ENCODE measurements at regions of chr14 and their contacts with region 1.

Region 1: GRCh38 chr14:21852061-21852664 is 178.5 kb upstream of the OR4E1 start:
- DNase-seq: peak; percentile 58
- H3K4me3 ChIP-seq: no peak overlapping the region
- H3K27ac ChIP-seq: no peak overlapping the region
- H3K4me1 ChIP-seq: no peaks in the 10 kb centered on the region
- H3K27me3 ChIP-seq: peaks cover 20 to 37% of the 10 kb centered on the region in 2 experiments
- CTCF ChIP-seq: peak; percentile 76 to 86
- POLR2A ChIP-seq: no peak

Region 2: DNA sequence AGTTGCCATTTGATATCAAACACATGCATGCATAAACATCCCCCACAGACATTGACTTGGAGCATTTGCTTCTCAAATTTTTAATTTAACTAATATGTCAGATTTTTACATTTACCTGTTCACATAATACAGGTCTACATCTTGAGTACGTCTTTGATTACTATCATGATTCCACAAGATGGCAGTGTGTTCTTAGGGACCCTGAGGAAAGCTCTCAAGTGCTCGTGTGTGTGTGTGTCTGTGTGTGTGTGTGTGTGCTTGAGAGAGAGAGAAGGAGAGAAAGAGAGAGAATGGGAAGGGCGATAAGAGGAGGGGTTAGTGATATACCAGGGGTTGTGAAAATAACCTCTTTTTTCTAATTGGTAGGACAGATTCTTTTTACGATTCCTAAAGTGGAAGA is 11.4 kb before region 1 on chr14:
- CTCF ChIA-PET with region 1: interaction called, 18 read pairs
- POLR2A ChIA-PET with region 1: no interaction called
- dilution Hi-C with region 1: no loop called
- intact Hi-C with region 1: no loop called
- DNase-seq: no peak
- H3K4me3 ChIP-seq: no peak overlapping the region
- H3K27ac ChIP-seq: no peak overlapping the region
- H3K4me1 ChIP-seq: no peaks in the 10 kb centered on the region
- H3K27me3 ChIP-seq: peaks cover 15 to 56% of the 10 kb centered on the region in 2 experiments
- CTCF ChIP-seq: no peak
- POLR2A ChIP-seq: no peak

Region 3: DNA sequence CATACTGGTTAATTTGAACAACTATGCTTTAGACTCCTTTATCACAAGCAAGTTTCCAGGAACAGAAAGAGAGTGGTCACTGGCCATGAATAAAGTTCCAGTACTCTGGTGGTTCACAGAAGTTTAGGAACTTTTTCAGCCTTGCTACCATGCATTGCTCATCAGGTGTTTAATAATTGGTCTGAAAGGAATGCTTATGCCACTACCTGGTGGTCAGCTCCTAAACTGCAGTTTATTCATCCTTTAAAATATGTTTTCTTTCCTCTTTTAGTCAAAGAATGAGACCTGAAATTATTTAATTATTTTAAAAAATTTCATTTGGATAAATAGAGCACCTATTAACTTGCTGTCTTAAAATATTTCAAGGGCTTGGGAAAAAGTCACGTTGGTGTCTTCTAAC is 81.5 kb after region 1 on chr14:
- CTCF ChIA-PET with region 1: interaction called, 25 read pairs
- POLR2A ChIA-PET with region 1: no interaction called
- dilution Hi-C with region 1: no loop called
- intact Hi-C with region 1: no loop called
- DNase-seq: peak; percentile 53
- H3K4me3 ChIP-seq: no peak overlapping the region
- H3K27ac ChIP-seq: no peak overlapping the region
- H3K4me1 ChIP-seq: no peaks in the 10 kb centered on the region
- H3K27me3 ChIP-seq: no peaks in the 10 kb centered on the region
- CTCF ChIP-seq: peak; percentile 35 to 52
- POLR2A ChIP-seq: no peak

Region 4: GRCh38 chr14:22039938-22040775 is 188.0 kb after region 1 on chr14:
- CTCF ChIA-PET with region 1: interaction called, 11 read pairs
- POLR2A ChIA-PET with region 1: no interaction called
- dilution Hi-C with region 1: no loop called
- intact Hi-C with region 1: no loop called
- DNase-seq: peak; percentile 32
- H3K4me3 ChIP-seq: no peak overlapping the region
- H3K27ac ChIP-seq: no peak overlapping the region
- H3K4me1 ChIP-seq: no peaks in the 10 kb centered on the region
- H3K27me3 ChIP-seq: peaks cover 4 to 5% of the 10 kb centered on the region in 2 experiments
- CTCF ChIP-seq: peak; percentile 51 to 60
- POLR2A ChIP-seq: no peak